ENCODE measurements at regions of chr1 and their contacts with region 1.

Region 1: GRCh38 chr1:196577386-196577785 is 30.9 kb downstream of the KCNT2 start:
- DNase-seq: no peak
- ATAC-seq: no peak
- H3K4me3 ChIP-seq: no peak overlapping the region
- H3K27ac ChIP-seq: no peak overlapping the region
- H3K4me1 ChIP-seq: no peaks in the 10 kb centered on the region
- H3K27me3 ChIP-seq: no peaks in the 10 kb centered on the region
- CTCF ChIP-seq: no peak
- EP300 ChIP-seq: no peak
- POLR2A ChIP-seq: no peak
- RAD21 ChIP-seq: no peak

Region 2: DNA sequence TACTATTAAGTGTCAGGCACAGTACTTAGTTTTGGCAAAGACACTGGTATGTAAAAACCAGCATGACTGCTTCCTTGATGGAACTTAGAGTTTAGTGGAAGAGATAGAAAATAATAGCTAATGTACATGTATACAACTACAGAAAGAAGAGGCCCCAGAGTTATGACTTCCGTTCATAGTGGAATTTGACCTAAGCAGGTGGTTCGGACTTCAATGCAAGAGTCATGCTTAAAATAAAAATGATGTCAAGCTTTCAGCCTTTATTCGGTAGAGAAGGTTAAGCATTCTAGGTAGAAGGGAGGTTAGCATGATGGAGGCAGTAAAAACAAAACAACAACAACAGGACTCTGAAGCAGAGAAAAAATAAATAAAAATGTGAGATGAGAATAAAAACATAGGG is 135.0 kb before region 1 on chr1:
- CTCF ChIA-PET with region 1: no interaction called
- POLR2A ChIA-PET with region 1: no interaction called
- in situ Hi-C with region 1: loop called (anchors 10 kb)
- intact Hi-C with region 1: no loop called
- DNase-seq: no peak
- ATAC-seq: no peak
- H3K4me3 ChIP-seq: no peak overlapping the region
- H3K27ac ChIP-seq: no peak overlapping the region
- H3K4me1 ChIP-seq: no peaks in the 10 kb centered on the region
- H3K27me3 ChIP-seq: no peaks in the 10 kb centered on the region
- CTCF ChIP-seq: no peak
- EP300 ChIP-seq: no peak
- POLR2A ChIP-seq: no peak
- RAD21 ChIP-seq: no peak

Region 3: DNA sequence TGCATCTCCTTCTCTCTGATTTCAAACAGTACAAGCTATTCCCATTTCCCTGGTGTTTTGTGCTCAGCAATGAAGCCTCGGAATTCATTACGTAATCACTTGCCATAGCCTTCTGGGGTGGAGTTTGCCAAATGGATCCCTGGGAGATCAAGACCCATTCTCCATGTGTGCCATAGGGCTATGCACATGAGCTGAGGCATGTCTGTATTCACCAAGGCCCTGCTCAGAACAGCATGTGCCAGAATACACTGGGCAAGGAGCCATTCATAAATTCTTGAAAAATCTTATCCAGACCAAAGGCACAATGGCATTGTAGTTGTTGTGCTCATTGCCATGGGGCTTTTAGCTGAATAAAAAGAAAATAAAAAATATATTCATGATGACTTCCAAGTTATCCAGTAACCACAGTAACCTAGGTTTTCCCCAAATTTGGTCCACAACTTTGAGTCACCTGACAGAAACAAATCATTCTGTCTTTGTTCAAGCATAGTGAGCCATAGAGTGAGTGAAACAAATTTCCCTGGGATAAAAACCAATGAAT is 743.7 kb after region 1 on chr1:
- CTCF ChIA-PET with region 1: no interaction called
- POLR2A ChIA-PET with region 1: no interaction called
- in situ Hi-C with region 1: no loop called
- intact Hi-C with region 1: no loop called
- DNase-seq: no peak
- ATAC-seq: no peak
- H3K4me3 ChIP-seq: no peak overlapping the region
- H3K27ac ChIP-seq: no peak overlapping the region
- H3K4me1 ChIP-seq: no peaks in the 10 kb centered on the region
- H3K27me3 ChIP-seq: no peaks in the 10 kb centered on the region
- CTCF ChIP-seq: no peak
- EP300 ChIP-seq: no peak
- POLR2A ChIP-seq: no peak
- RAD21 ChIP-seq: no peak